ENCODE measurements at regions of chr7 and their contacts with region 1.

Region 1: GRCh38 chr7:71210220-71210619 is 78.3 kb downstream of the GALNT17 start:
- DNase-seq: no peak
- H3K4me3 ChIP-seq: no peak overlapping the region
- H3K27ac ChIP-seq: no peak overlapping the region
- H3K4me1 ChIP-seq: no peaks in the 10 kb centered on the region
- CTCF ChIP-seq: no peak

Region 2: DNA sequence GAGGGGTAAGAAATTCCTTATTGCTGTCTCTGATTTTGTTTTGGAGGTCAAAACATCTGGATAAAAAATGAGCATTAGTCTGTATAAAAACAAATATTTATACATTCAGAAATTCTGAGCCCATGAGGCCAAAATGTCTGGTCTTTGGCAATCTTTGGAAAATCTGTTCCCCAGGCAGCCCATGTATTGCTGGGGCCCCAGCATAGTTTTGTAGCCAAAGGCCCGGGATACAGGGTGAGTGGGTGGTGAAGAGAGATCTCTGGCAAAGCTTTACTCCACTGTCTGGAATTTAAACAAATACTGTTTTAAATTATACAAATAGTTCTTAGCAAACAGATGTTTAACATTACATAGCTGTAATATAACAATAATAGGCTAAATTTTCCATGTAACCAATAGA is 213.0 kb before region 1 on chr7:
- CTCF ChIA-PET with region 1: no interaction called
- POLR2A ChIA-PET with region 1: no interaction called
- intact Hi-C with region 1: loop called (anchors 10 kb)
- DNase-seq: no peak
- H3K4me3 ChIP-seq: no peak overlapping the region
- H3K27ac ChIP-seq: no peak overlapping the region
- H3K4me1 ChIP-seq: no peaks in the 10 kb centered on the region
- CTCF ChIP-seq: no peak

Region 3: DNA sequence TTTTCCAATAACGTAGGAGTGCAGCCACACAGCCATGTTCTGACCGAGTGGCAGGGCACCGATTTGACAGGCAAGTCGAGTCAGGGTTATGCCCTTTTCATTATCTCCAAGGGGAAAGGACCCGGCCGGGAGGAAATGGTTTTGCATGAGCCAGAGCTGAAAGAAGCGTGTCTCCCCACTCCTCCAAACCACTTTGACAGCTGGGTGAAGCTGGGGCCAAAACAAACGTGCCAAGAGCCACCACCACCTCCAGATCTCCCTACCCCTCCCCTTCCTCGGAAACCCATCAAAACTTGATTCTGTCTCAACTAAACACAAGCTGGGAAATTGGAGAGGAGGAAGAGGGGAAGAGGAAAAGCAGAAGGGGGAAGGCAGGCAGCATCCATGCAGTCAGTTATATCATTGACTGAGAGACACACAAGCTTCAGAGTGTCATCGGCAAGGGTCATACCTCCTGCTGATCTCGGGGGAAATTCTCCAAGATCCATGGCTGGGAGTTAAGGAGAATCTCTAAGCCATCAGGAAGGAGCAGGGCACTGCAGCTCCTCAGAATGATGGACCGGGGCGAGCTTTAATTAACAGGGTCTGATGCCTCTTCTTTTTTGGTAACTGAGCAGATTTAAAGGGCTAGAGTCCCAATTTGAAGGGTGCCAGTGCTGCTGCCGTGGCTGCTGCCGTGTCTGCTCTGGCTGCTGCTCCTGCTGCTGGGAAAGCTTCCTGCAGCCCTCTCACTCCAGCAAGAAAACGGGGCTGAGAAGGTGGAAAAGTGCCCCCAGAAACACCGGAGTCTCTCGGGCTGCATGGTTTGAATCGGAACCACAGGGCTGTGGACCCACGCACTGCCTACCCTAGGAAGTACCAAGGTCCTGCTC is 1236.6 kb after region 1 on chr7:
- CTCF ChIA-PET with region 1: no interaction called
- POLR2A ChIA-PET with region 1: no interaction called
- intact Hi-C with region 1: no loop called
- DNase-seq: no peak
- H3K4me3 ChIP-seq: no peak overlapping the region
- H3K27ac ChIP-seq: no peak overlapping the region
- H3K4me1 ChIP-seq: no peaks in the 10 kb centered on the region
- CTCF ChIP-seq: no peak

Measured in OCI-LY7 (cell line).